Activated T-helper 1 cell treated with anti-CD3 and anti-CD28 coated beads, Interleukin-12 subunit alpha, Interleukin-12 subunit beta, Interleukin-2, Interleukin-4 antibody, amounts not matched to agents 30 ng/mL and 10 ng/mL and 1 ng/mL, durations not matched to agents 14 hours and 24 hours and 36 hours (primary cell): ENCODE measurements at regions of chr1 and their contacts with region 1.

Region 1: GRCh38 chr1:26787706-26788514 is at the start of gene PIGV:
- DNase-seq: peak; percentile 84
- H3K4me3 Mint-ChIP-seq: peak within 1 kb of the TSS; percentile 97
- H3K27ac Mint-ChIP-seq: peak within 1 kb of the TSS; percentile 100
- H3K4me1 Mint-ChIP-seq: peaks cover 74% of the 10 kb centered on the region
- H3K27me3 Mint-ChIP-seq: peaks cover 1% of the 10 kb centered on the region
- total RNA-seq, gene PIGV: 18.5 and 22.6 TPM in 2 replicates

Region 2: GRCh38 chr1:26472901-26473845 is 314.7 kb before region 1 on chr1:
- intact Hi-C with region 1: loop called (anchors 1 kb)
- DNase-seq: peak; percentile 95
- H3K4me3 Mint-ChIP-seq: peak overlapping the region; percentile 89
- H3K27ac Mint-ChIP-seq: peak overlapping the region; percentile 53
- H3K4me1 Mint-ChIP-seq: peaks cover 64% of the 10 kb centered on the region
- H3K27me3 Mint-ChIP-seq: no peaks in the 10 kb centered on the region

Region 3: DNA sequence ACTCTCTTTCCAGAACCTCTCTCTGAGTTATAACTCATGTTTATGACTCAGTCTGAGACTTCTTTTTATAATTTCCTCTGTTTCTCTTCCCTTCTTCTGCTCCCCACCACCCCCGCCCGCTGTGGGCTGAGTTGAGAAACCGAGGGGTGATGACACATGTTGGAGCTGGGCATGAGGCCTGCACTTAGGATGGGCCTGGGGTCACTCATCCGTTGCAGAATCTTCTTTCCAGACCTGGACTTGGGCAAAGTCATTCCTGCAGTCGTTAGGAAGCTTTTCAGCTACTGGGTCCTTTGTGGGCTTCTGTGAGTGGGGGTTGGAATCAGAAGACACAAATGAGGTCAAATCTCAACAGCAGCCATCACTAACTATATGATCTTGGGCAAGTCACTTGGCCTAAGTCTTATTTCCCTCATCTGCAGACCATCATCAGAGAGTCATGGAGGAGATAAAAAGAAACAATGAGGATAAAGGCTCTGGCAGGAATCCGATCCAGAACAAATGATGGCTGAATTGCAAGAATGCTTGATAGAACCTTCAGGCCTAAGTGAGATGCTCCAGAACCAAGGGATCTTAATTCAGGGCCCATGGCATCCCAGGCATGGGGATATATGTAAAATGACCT is 205.0 kb before region 1 on chr1:
- intact Hi-C with region 1: loop called (anchors 1 kb)
- DNase-seq: peak; percentile 37
- H3K4me3 Mint-ChIP-seq: peak overlapping the region; percentile 49
- H3K27ac Mint-ChIP-seq: peak overlapping the region; percentile 93
- H3K4me1 Mint-ChIP-seq: peaks cover 55% of the 10 kb centered on the region
- H3K27me3 Mint-ChIP-seq: no peaks in the 10 kb centered on the region

Region 4: GRCh38 chr1:26701995-26702679 is 85.8 kb before region 1 on chr1:
- intact Hi-C with region 1: loop called (anchors 1 kb)
- DNase-seq: no peak
- H3K4me3 Mint-ChIP-seq: no peak overlapping the region
- H3K27ac Mint-ChIP-seq: no peak overlapping the region
- H3K4me1 Mint-ChIP-seq: peaks cover 23% of the 10 kb centered on the region
- H3K27me3 Mint-ChIP-seq: no peaks in the 10 kb centered on the region

Region 5: DNA sequence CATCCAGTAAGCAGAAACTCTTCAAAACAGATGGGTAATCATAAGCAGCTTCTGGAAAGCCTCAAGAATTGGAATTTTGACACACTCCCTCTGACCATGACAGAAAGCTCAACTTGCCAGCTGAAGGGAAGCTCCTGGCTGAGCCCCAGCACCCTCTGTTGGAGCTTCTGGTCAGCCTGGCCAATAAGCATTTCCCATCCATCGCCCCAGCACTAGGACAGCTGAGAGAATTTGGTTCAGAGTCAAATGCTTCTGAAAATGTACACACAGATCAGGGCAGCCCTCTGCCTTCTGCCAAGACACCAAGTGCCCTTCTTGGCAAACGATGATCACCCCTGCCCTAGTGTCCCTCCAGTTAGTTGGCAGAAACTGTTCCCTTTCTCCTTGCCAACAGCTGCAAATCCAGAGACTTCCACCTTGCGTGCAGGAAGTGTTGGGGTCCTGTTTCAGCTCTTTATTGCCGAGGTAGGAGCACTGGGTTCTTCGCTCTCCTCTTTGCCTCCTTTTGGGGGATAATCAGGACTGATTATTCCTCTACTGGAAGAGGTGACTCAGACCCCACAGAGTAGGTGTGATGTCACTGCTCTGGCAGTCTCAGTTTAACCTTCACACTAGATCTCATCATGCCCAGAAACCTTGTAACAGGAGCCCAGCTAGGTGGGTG is 11.7 kb after region 1 on chr1:
- intact Hi-C with region 1: loop called (anchors 1 kb)
- DNase-seq: no peak
- H3K4me3 Mint-ChIP-seq: peak overlapping the region; percentile 55
- H3K27ac Mint-ChIP-seq: peak overlapping the region; percentile 79
- H3K4me1 Mint-ChIP-seq: peaks cover 53% of the 10 kb centered on the region
- H3K27me3 Mint-ChIP-seq: no peaks in the 10 kb centered on the region

Region 6: GRCh38 chr1:26864610-26865527 is 77.0 kb after region 1 on chr1:
- intact Hi-C with region 1: loop called (anchors 2 kb)
- DNase-seq: peak; percentile 96
- H3K4me3 Mint-ChIP-seq: peak overlapping the region; percentile 98
- H3K27ac Mint-ChIP-seq: peak overlapping the region; percentile 98
- H3K4me1 Mint-ChIP-seq: peaks cover 32% of the 10 kb centered on the region
- H3K27me3 Mint-ChIP-seq: no peaks in the 10 kb centered on the region